Spleen (tissue), 13 donors: ENCODE measurements at regions of chr17 and their contacts with region 1.

Region 1: DNA sequence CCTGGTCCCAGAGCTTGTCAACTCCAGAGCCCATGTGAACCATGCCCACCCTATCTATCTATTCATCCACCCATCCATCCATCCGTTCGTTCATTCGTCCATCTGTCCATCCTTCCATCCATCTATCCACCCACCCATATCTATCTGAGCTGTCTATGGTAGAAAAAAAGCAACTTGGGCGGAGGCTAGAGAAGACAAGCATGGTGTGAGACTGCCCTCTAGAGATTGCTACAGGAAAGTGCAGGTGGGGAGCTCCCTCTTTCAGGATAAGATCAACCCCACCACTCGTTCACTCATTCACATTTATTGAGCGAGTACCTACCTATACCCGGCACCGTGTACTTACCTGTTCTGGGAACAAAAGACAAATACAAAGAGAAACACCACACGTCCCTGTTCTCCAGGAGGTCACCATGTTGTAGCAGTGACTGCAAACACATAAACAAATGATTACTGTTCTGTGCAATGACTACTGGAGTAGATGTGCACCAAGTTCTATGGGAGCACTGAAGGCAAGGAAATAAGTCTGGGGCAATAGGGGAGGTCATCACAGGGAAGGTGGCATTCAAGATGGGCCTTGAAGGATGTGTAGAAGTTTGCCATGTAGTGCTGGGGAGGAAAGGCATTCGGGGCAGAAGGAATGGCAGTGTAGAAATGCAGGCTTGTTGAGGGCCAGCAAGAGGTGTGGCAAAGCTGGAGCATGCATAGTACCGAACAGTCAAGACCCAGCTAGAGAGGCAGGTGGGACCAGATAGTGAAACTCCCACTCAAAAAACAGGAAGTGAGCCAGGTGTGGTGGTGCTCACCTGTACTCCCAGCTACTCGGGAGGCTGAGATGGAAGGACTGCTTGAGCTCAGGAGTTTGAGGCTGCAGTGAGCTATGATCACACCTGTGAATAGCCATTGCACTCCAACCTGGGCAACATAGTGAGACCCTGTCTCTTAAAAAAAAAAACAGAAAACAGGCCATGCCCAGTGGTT is 13.4 kb upstream of the ATP5MC1 start:
- DNase-seq: no peak
- H3K4me3 ChIP-seq: no peak overlapping the region
- H3K27ac ChIP-seq: no peak overlapping the region
- H3K4me1 ChIP-seq: peaks cover 0 to 22% (median 2%) of the 10 kb centered on the region in 6 donors
- H3K27me3 ChIP-seq: no peaks in the 10 kb centered on the region
- CTCF ChIP-seq: peak; percentile 84 to 97 (median 94)
- POLR2A ChIP-seq: no peak

Region 2: GRCh38 chr17:48678141-48678971 is 200.9 kb before region 1 on chr17:
- intact Hi-C with region 1: loop called (anchors 5 kb)
- DNase-seq: peak; percentile 89
- H3K4me3 ChIP-seq: peak overlapping the region in 2 of 8 donors; percentile 7 to 55
- H3K27ac ChIP-seq: no peak overlapping the region
- H3K4me1 ChIP-seq: peaks cover 3 to 9% (median 6%) of the 10 kb centered on the region in 6 donors
- H3K27me3 ChIP-seq: peaks cover 0 to 89% (median 19%) of the 10 kb centered on the region in 7 donors
- CTCF ChIP-seq: peak; percentile 65 to 97 (median 90)
- POLR2A ChIP-seq: no peak

Region 3: GRCh38 chr17:48724251-48725003 is 154.8 kb before region 1 on chr17:
- intact Hi-C with region 1: loop called (anchors 10 kb)
- DNase-seq: peak; percentile 89
- H3K4me3 ChIP-seq: peak overlapping the region in 1 of 8 donors; percentile 48
- H3K27ac ChIP-seq: no peak overlapping the region
- H3K4me1 ChIP-seq: peaks cover 14 to 67% (median 51%) of the 10 kb centered on the region in 6 donors
- H3K27me3 ChIP-seq: peaks cover 29 to 100% (median 100%) of the 10 kb centered on the region in 7 donors
- CTCF ChIP-seq: peak in 10 of 11 experiments; percentile 50 to 82 (median 68)
- POLR2A ChIP-seq: no peak

Region 4: GRCh38 chr17:48814504-48814903 is 64.7 kb before region 1 on chr17:
- intact Hi-C with region 1: loop called (anchors 5 kb)
- DNase-seq: no peak
- H3K4me3 ChIP-seq: no peak overlapping the region
- H3K27ac ChIP-seq: no peak overlapping the region
- H3K4me1 ChIP-seq: peaks cover 12 to 24% (median 15%) of the 10 kb centered on the region in 6 donors
- H3K27me3 ChIP-seq: peaks cover 0 to 61% (median 16%) of the 10 kb centered on the region in 7 donors
- CTCF ChIP-seq: peak; percentile 43 to 81 (median 74)
- POLR2A ChIP-seq: no peak

Region 5: GRCh38 chr17:48825446-48826381 is 53.5 kb before region 1 on chr17:
- intact Hi-C with region 1: no loop called
- DNase-seq: no peak
- H3K4me3 ChIP-seq: no peak overlapping the region
- H3K27ac ChIP-seq: no peak overlapping the region
- H3K4me1 ChIP-seq: peaks cover 0 to 6% (median 4%) of the 10 kb centered on the region in 6 donors
- H3K27me3 ChIP-seq: peaks cover 0 to 24% (median 0%) of the 10 kb centered on the region in 7 donors
- CTCF ChIP-seq: no peak
- POLR2A ChIP-seq: no peak